HEK293 (cell line): ENCODE measurements at regions of chr20 and their contacts with region 1.

Region 1: GRCh38 chr20:8401556-8401955 is 269.5 kb downstream of the PLCB1 start:
- H3K4me3 ChIP-seq: no peak overlapping the region
- H3K27ac ChIP-seq: no peak overlapping the region
- H3K4me1 ChIP-seq: no peaks in the 10 kb centered on the region; the same call in 1 of the 2 replicates
- CTCF ChIP-seq: no peak

Region 2: DNA sequence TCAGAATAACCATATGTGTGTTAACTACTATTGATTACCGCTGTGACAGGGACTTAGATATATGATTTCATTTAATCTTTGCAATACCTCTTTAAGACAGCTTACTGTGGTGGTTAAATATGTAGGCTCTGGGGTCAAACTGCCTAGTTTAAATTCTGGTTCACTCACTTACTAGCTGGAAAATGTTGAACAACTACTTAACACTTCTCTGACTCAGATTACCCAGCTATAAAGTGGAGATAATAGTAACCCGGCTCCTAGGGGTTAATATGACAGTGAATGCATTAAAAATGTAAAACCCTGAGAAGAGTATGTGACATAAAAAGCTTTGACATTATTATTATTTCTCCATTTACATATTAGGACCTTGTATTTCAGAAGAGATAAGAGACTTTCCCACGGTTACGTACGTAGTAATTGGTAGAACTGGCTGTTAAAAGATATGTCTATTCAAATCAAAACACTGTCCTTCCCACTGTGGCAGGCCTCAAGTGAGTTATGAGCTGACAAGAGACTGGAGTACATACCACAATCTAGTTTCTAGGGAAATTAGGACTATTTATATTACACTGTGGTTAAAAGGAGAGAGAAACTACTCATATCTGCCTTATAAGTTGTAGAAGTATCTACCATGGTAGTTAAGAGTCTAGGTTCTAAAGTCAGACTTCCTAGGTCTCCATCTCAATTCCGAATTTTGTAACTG is 273.9 kb before region 1 on chr20:
- CTCF ChIA-PET with region 1: no interaction called
- POLR2A ChIA-PET with region 1: no interaction called
- H3K4me3 ChIP-seq: no peak overlapping the region
- H3K27ac ChIP-seq: no peak overlapping the region
- H3K4me1 ChIP-seq: no peaks in the 10 kb centered on the region
- CTCF ChIP-seq: no peak

Region 3: GRCh38 chr20:8389381-8390036 is 12.0 kb before region 1 on chr20:
- CTCF ChIA-PET with region 1: interaction called, 10 read pairs
- POLR2A ChIA-PET with region 1: no interaction called
- H3K4me3 ChIP-seq: no peak overlapping the region
- H3K27ac ChIP-seq: no peak overlapping the region
- H3K4me1 ChIP-seq: peaks cover 7% of the 10 kb centered on the region; the same call in 1 of the 2 replicates
- CTCF ChIP-seq: no peak